Activated CD4-positive, alpha-beta T cell treated with anti-CD3 and anti-CD28 coated beads for 36 hours (primary cell): ENCODE measurements at regions of chr19 and their contacts with region 1.

Region 1: GRCh38 chr19:15449620-15450527 is at the start of gene WIZ:
- DNase-seq: peak; percentile 90
- ATAC-seq: peak; percentile 68
- H3K4me3 Mint-ChIP-seq: peak within 1 kb of the TSS; percentile 55
- H3K27ac Mint-ChIP-seq: peak within 1 kb of the TSS; percentile 79
- H3K4me1 Mint-ChIP-seq: peaks cover 17% of the 10 kb centered on the region
- H3K27me3 Mint-ChIP-seq: no peaks in the 10 kb centered on the region
- total RNA-seq, gene WIZ: 21.2 to 22.6 TPM

Region 2: GRCh38 chr19:15432629-15433518 is 17.0 kb before region 1 on chr19:
- CTCF ChIA-PET with region 1: no interaction called
- POLR2A ChIA-PET with region 1: no interaction called
- intact Hi-C with region 1: loop called in 1 of 2 experiments (anchors 1 kb)
- DNase-seq: peak; percentile 97
- ATAC-seq: peak; percentile 87
- H3K4me3 Mint-ChIP-seq: peak overlapping the region; percentile 87
- H3K27ac Mint-ChIP-seq: peak overlapping the region; percentile 91
- H3K4me1 Mint-ChIP-seq: peaks cover 26% of the 10 kb centered on the region
- H3K27me3 Mint-ChIP-seq: no peaks in the 10 kb centered on the region